PC-3 (cell line): ENCODE measurements at regions of chr9 and their contacts with region 1.

Region 1: DNA sequence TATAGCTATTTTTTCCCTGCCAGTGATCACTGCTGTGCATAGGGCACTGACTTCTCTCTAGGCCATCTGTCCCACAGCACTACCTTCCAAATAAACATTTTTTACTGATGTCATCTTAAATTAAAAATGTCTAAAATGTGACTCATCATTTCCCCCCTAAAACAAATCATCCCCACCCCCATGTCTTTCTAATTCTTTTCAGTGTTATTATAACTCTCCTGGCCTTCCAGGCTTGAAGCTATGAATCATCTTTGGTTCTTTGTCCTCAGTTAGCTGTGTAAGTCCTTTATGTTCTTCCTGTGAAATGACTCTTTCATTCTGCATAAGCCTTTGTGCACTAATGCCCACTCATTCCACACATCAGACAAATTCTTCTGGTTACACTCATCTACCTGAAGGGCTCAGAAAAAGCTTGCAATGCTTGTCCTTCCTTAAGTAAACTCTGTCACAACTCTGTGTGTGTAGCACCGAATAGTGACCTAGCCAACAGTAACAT is 78.1 kb downstream of the CFAP95 start:
- DNase-seq: peak; percentile 90
- ATAC-seq: peak; percentile 92
- H3K4me3 ChIP-seq: no peak overlapping the region
- H3K27ac ChIP-seq: peak overlapping the region; percentile 75
- H3K4me1 ChIP-seq: peaks cover 32% of the 10 kb centered on the region
- H3K27me3 ChIP-seq: no peaks in the 10 kb centered on the region
- CTCF ChIP-seq: no peak

Region 2: DNA sequence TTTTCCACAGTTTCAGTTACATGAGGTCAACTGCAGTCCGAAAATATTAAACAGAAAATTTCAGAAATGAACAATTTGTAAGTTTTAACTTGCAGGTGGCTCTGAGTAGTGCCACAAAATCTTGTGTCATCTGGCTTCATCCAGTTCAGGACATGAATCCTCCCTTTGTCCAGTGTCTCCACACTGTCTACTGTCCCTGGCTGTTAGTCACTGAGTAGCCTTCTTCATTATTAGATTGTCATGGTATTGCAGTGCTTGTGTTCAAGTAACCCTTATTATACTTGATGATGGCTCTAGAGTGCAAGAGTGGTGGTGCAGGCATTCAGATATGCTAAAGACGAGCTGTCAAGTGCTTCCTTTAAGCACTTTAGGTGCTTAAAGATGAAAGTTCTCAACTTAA is 12.8 kb before region 1 on chr9:
- CTCF ChIA-PET with region 1: interaction called, 12 read pairs
- POLR2A ChIA-PET with region 1: no interaction called
- intact Hi-C with region 1: no loop called
- DNase-seq: peak; percentile 24
- ATAC-seq: peak; percentile 37
- H3K4me3 ChIP-seq: no peak overlapping the region
- H3K27ac ChIP-seq: no peak overlapping the region
- H3K4me1 ChIP-seq: peaks cover 17% of the 10 kb centered on the region
- H3K27me3 ChIP-seq: no peaks in the 10 kb centered on the region
- CTCF ChIP-seq: no peak

Region 3: GRCh38 chr9:69996967-69997366 is 98.2 kb after region 1 on chr9:
- CTCF ChIA-PET with region 1: no interaction called
- POLR2A ChIA-PET with region 1: no interaction called
- intact Hi-C with region 1: no loop called
- DNase-seq: no peak
- ATAC-seq: no peak
- H3K4me3 ChIP-seq: no peak overlapping the region
- H3K27ac ChIP-seq: no peak overlapping the region
- H3K4me1 ChIP-seq: no peaks in the 10 kb centered on the region
- H3K27me3 ChIP-seq: peaks cover 9% of the 10 kb centered on the region; the same call in 1 of the 2 replicates
- CTCF ChIP-seq: no peak